ENCODE measurements at regions of chr9 and their contacts with region 1.

Region 1: DNA sequence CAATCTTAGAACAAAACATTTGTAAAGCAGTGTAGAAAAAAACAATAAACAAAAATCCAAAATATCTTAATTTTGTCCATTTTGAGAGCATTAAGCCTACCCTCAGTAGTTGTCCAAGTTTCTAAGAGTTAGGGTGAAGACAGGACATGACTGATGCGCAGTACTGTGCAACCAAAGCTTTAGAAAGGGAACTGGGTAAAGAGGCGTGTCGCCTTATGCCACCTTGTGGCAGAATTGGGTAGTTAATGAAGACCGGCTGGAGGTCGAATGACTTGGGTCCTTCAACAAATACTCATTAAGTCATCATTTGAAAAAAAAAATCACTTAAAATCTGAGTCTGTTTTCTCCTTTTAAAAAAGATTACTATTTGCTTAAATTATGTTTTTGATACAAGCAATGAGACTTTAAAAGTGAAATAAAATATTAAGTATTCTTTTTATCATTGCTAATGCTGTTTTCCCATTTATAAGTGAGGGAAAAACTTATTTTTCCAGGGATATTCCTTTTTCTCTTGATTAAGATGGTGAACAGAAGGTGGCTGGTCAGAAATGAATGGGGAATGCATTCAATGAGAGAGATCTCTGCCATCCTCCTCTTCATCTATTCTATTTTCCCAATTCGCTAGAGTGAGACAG is 3.5 kb upstream of the RNF20 start:
- DNase-seq: peak; percentile 61 to 78
- H3K4me3 ChIP-seq: no peak overlapping the region
- H3K27ac ChIP-seq: no peak overlapping the region
- H3K4me1 ChIP-seq: peaks cover 0 to 11% (median 5%) of the 10 kb centered on the region in 4 donors
- H3K27me3 ChIP-seq: no peaks in the 10 kb centered on the region
- CTCF ChIP-seq: peak; percentile 79 to 91

Region 2: GRCh38 chr9:101398068-101398929 is 131.9 kb before region 1 on chr9 and contains the starts of genes MRPL50 and ZNF189:
- intact Hi-C with region 1: loop called (anchors 5 kb)
- DNase-seq: peak; percentile 99
- H3K4me3 ChIP-seq: peak within 1 kb of the TSS; percentile 77 to 82
- H3K27ac ChIP-seq: peak within 1 kb of the TSS; percentile 85 to 89
- H3K4me1 ChIP-seq: peaks cover 0 to 38% (median 21%) of the 10 kb centered on the region in 4 donors
- H3K27me3 ChIP-seq: no peaks in the 10 kb centered on the region
- CTCF ChIP-seq: no peak

Region 3: GRCh38 chr9:101458955-101459631 is 71.1 kb before region 1 on chr9:
- intact Hi-C with region 1: loop called (anchors 2 kb)
- DNase-seq: no peak
- H3K4me3 ChIP-seq: no peak overlapping the region
- H3K27ac ChIP-seq: no peak overlapping the region
- H3K4me1 ChIP-seq: no peaks in the 10 kb centered on the region
- H3K27me3 ChIP-seq: peaks cover 0 to 3% of the 10 kb centered on the region in 2 donors
- CTCF ChIP-seq: peak; percentile 78 to 81